ENCODE measurements at regions of chr22 and their contacts with region 1.

Region 1: GRCh38 chr22:19178656-19179496 is at the start of gene SLC25A1:
- DNase-seq: peak; percentile 66 to 95
- H3K4me3 ChIP-seq: peak within 1 kb of the TSS; percentile 96 to 97
- H3K27ac ChIP-seq: peak within 1 kb of the TSS; percentile 92 to 93
- H3K4me1 ChIP-seq: peaks cover 6 to 29% of the 10 kb centered on the region in 2 donors
- H3K27me3 ChIP-seq: no peaks in the 10 kb centered on the region
- CTCF ChIP-seq: peak in 1 of 3 experiments; percentile 15
- total RNA-seq, gene SLC25A1: 89.3 TPM

Region 2: GRCh38 chr22:19066531-19067271 is 112.2 kb before region 1 on chr22:
- intact Hi-C with region 1: no loop called
- DNase-seq: no peak
- H3K4me3 ChIP-seq: no peak overlapping the region
- H3K27ac ChIP-seq: no peak overlapping the region
- H3K4me1 ChIP-seq: no peaks in the 10 kb centered on the region
- H3K27me3 ChIP-seq: no peaks in the 10 kb centered on the region
- CTCF ChIP-seq: no peak

Region 3: DNA sequence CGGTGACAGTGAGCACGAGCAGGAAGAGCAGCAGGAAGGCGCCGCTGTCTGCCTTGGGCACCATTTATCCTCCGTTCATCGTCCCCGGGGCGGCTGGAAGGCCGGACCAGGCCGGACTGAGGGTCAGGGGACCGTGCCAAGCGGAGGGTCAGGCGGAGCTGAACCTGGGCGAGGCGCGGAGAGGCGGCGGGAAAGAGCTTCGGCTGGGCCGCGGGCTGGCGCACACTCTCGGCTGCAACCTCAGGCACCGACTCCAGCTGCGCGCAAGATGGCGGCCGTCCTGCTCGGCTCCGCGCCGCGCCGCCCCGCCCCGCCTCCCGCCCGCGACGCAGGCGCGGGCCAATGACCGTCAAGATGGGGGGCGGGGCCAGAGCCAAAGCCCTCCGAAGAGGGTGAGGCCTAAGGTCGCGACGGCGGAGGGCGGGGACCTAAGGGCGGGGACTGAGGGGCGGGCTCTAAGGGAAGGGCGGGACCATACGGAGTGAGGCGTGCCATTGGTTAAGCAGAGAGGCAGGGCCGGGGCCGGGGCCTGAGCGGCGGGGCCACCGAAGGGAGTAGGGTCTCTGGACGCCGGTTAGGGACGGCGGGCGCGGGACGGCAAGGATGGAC is 56.6 kb before region 1 on chr22 and contains the start of gene DGCR2:
- intact Hi-C with region 1: loop called (anchors 1 kb)
- DNase-seq: peak; percentile 87 to 98
- H3K4me3 ChIP-seq: peak within 1 kb of the TSS; percentile 86 to 97
- H3K27ac ChIP-seq: peak within 1 kb of the TSS; percentile 83 to 87
- H3K4me1 ChIP-seq: peaks cover 16 to 27% of the 10 kb centered on the region in 2 donors
- H3K27me3 ChIP-seq: no peaks in the 10 kb centered on the region
- CTCF ChIP-seq: no peak
- total RNA-seq, gene DGCR2: 34.7 TPM

Region 4: DNA sequence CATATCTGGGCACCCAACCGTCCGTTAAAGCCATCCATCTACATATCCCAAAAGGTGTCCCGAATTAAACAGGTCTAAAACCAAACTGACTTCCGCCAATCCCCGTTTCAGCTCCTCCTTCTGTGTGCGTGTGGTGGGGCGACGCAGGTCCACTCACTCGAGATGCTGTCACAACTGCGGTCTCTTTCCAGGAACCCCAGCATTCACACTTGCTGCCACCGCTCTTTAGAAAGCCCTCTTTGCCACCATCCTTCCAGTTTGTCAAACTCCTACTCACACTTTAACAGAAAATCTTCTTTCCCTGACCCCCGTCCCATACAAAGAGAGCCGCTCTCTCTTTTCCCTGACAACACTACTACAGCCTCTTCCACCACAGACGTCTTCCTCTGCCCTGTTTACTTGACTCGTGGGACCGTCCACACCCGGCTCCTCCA is 34.9 kb before region 1 on chr22:
- intact Hi-C with region 1: loop called (anchors 1 kb)
- DNase-seq: no peak
- H3K4me3 ChIP-seq: peak overlapping the region; percentile 78 to 80
- H3K27ac ChIP-seq: peak overlapping the region; percentile 63 to 72
- H3K4me1 ChIP-seq: peaks cover 0 to 9% of the 10 kb centered on the region in 2 donors
- H3K27me3 ChIP-seq: peaks cover 5% of the 10 kb centered on the region
- CTCF ChIP-seq: no peak

Region 5: GRCh38 chr22:19291580-19292457 is 112.9 kb after region 1 on chr22 and contains the start of gene CLTCL1:
- intact Hi-C with region 1: loop called (anchors 1 kb)
- DNase-seq: peak in 1 of 2 donors; percentile 82
- H3K4me3 ChIP-seq: peak within 1 kb of the TSS; percentile 87 to 94
- H3K27ac ChIP-seq: peak within 1 kb of the TSS; percentile 47 to 69
- H3K4me1 ChIP-seq: peaks cover 4 to 5% of the 10 kb centered on the region in 2 donors
- H3K27me3 ChIP-seq: no peaks in the 10 kb centered on the region
- CTCF ChIP-seq: no peak
- total RNA-seq, gene CLTCL1: 26.0 TPM

Region 6: DNA sequence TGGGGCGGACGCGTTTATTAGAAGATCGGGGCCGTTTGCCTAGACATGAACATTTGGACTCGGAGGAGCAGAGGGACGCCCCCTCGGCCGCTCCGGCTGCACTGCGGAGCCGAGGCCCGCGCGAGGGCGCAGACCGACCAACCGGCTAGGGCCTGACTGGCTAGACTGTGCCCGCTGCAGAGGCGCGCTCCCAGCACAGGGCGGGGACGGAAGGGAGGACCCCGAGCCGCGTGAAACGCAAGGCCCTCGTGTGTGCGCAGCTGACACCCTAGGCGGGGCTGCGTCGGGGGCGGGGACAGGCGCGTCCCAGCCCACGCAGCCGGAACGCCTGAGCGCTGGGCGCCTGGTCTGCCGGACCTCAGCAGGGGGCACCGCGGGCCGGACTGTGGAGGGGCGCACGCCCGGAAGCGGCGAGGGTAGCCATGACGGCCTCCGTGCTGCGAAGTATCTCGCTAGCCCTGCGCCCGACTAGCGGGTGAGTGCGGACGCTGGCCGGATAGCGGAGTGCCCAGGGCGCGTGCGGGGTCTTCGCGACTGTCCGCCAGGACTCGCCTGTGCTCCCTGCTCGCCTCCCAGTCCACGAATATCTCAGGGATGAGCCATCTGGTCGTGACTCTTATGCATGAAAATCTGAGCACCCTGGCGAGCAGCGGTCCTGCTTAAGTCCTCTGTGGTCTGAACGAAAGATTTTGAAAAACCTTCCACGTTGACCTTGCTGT is 253.4 kb after region 1 on chr22 and contains the start of gene MRPL40:
- intact Hi-C with region 1: loop called (anchors 2 kb)
- DNase-seq: peak; percentile 56 to 94
- H3K4me3 ChIP-seq: peak within 1 kb of the TSS; percentile 66 to 99
- H3K27ac ChIP-seq: peak within 1 kb of the TSS; percentile 95 to 98
- H3K4me1 ChIP-seq: peaks cover 0 to 22% of the 10 kb centered on the region in 2 donors
- H3K27me3 ChIP-seq: no peaks in the 10 kb centered on the region
- CTCF ChIP-seq: no peak
- total RNA-seq, gene MRPL40: 14.7 TPM

Region 7: DNA sequence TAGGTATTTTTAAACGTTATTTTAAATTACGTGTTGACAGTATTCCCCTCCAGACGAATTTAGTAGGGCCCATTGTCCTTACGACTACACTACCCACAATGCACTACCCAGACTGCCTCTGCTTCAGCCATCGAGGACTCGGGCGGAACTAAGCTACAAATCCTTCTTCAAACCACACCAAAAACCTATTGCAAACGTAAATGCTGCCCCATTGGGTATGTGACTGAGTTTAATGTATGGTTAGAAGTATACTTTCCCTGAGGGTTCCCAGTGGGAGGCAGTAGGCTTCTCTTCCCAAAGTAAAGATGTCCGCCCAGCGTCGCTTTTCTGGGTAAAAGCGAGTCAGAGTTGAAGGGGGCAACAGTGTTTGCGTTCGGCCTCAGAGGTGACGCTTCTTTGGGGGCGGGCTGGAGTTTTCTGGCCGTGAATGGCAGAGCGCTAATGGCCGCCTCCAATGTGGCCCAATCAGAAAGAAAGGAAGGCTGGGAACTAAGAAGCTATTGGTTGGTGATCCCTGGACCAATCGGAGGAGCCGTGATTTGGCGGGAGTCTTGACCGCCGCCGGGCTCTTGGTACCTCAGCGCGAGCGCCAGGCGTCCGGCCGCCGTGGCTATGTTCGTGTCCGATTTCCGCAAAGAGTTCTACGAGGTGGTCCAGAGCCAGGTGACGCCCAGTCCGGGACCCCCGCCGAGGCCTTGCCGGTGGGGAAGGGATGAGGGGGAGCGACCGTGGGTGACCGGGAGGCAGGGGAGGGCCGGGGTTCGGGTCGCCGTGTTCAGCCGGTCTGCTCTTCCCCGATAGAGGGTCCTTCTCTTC is 300.7 kb after region 1 on chr22 and contains the start of gene CDC45:
- intact Hi-C with region 1: loop called (anchors 1 kb)
- DNase-seq: peak; percentile 90 to 98
- H3K4me3 ChIP-seq: peak within 1 kb of the TSS; percentile 84 to 85
- H3K27ac ChIP-seq: peak within 1 kb of the TSS; percentile 87 to 98
- H3K4me1 ChIP-seq: peaks cover 3 to 11% of the 10 kb centered on the region in 2 donors
- H3K27me3 ChIP-seq: no peaks in the 10 kb centered on the region
- CTCF ChIP-seq: no peak
- total RNA-seq, gene CDC45: not detected

Measured in ascending aorta (tissue), 2 donors.